ENCODE measurements at regions of chr11 and their contacts with region 1.

Region 1: GRCh38 chr11:78420255-78420764 is 2.7 kb upstream of the GAB2 start:
- DNase-seq: peak; percentile 77
- H3K4me3 ChIP-seq: no peak overlapping the region
- H3K27ac ChIP-seq: peak overlapping the region; percentile 28
- H3K4me1 ChIP-seq: no peaks in the 10 kb centered on the region
- H3K27me3 ChIP-seq: no peaks in the 10 kb centered on the region
- CTCF ChIP-seq: peak; percentile 70

Region 2: GRCh38 chr11:78149646-78150045 is 270.7 kb before region 1 on chr11:
- intact Hi-C with region 1: loop called (anchors 5 kb)
- DNase-seq: no peak
- H3K4me3 ChIP-seq: no peak overlapping the region
- H3K27ac ChIP-seq: no peak overlapping the region
- H3K4me1 ChIP-seq: no peaks in the 10 kb centered on the region
- H3K27me3 ChIP-seq: no peaks in the 10 kb centered on the region
- CTCF ChIP-seq: no peak

Region 3: GRCh38 chr11:78228467-78228866 is 191.8 kb before region 1 on chr11:
- intact Hi-C with region 1: loop called (anchors 5 kb)
- DNase-seq: peak; percentile 44
- H3K4me3 ChIP-seq: no peak overlapping the region
- H3K27ac ChIP-seq: no peak overlapping the region
- H3K4me1 ChIP-seq: no peaks in the 10 kb centered on the region
- H3K27me3 ChIP-seq: no peaks in the 10 kb centered on the region
- CTCF ChIP-seq: peak; percentile 48